ENCODE measurements at regions of chr10 and their contacts with region 1.

Region 1: DNA sequence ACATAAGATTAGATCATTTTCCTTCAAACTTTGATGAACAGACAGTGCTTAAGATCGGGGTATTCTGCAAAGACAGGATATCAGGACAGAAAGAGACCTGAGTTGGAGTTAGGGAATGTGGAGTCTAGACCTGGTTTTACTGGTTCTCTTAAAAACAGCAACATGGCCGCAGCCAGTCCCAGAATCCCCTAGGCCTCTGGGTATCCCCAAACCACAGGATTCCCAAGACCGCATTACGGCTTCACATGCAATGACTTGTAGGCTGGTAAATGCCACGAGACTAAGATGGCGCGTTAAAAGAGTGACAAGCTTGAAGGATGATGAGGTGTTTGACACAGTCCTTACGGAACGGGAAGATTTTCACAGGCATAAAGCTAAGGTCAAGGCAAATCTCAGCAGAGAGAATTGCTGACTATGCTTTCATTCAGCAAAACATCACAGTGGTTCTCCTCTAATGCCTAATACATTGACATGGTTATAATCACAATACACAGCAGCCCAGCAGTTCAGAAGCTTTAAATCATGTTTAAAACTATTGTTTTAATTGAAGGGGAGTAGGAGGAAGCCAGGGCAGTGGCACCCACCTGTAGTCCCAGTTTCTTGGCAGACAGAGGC is 32.9 kb downstream of the MPP7 start:
- DNase-seq: no peak
- H3K4me3 ChIP-seq: no peak overlapping the region
- CTCF ChIP-seq: no peak

Region 2: DNA sequence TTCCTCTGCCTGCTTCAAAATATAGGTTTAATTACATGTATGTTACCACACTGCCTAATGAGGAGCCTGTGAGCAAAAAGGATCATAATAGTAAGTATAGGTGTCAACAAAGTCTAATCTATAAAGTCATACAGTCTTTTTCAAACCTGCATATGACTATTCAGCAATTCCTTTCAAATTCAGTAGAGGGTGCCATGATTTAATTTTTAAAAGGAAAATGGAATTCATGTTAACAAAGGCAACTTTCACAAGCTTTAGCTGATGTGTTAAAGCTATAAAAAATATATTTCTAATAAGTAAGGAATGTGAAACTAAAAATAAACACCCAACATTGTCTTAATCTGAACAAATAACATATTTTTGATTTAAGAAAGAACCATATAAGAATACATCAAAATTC is 19.2 kb before region 1 on chr10:
- CTCF ChIA-PET with region 1: interaction called, 11 read pairs
- POLR2A ChIA-PET with region 1: no interaction called
- DNase-seq: no peak
- H3K4me3 ChIP-seq: no peak overlapping the region
- CTCF ChIP-seq: peak; percentile 15

Region 3: GRCh38 chr10:28291881-28292297 is 21.9 kb after region 1 on chr10:
- CTCF ChIA-PET with region 1: no interaction called
- POLR2A ChIA-PET with region 1: no interaction called
- DNase-seq: peak; percentile 65
- H3K4me3 ChIP-seq: no peak overlapping the region
- CTCF ChIP-seq: no peak